HepG2 (cell line): ENCODE measurements at regions of chr11 and their contacts with region 1.

Region 1: DNA sequence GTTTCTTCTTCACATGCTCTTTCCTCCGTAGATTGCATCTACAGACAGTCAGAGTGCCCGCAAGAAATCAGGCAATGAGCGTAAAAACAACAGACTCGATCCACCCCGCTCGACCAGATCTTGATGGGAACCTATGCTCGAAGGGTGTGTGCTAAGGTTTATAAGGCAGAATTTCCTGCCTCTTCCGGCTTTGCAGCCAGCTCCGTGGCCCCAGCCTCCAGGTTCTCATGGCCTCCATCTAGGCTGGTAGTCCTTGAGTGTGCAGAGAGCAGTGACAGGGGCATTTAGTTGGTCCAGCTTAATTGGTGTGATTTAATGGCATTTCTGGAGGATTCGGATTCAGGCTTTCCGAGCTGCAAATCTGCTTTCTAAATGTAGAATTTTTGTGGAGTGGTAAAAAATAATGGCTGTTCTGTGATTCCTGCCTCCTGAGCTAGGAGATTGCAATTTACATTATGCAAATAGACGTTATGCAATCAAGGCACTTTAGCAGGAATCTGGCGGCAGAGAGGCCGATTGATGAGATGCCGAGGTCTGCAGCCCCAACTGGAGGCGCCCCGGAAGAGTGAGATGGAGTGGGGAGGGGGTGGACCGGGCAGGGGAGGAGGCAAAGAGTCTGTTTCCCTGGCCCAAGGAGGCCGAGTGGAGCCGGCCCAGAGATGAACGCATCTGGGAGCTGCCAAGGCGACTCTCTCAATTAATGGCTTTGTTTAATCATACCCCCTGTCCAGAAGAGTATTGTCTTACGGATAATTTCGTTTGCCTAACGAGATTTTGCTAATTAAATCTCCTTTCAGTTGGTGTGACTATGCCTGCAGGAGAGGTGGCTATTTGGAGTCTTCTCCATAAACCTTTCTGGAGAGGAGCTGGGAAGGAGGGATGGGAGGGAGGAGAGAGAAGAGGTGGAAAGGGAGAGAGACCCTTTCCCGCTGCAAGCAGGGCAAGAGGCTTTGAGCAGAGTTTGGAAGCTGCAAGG is 75.3 kb downstream of the PKNOX2 start:
- DNase-seq: no peak
- ATAC-seq: no peak
- H3K4me3 ChIP-seq: no peak overlapping the region
- H3K27ac ChIP-seq: no peak overlapping the region
- H3K4me1 ChIP-seq: peaks cover 10% of the 10 kb centered on the region
- H3K27me3 ChIP-seq: peaks cover 0 to 5% of the 10 kb centered on the region in 2 experiments; a peak in 2 of 5 replicates
- CTCF ChIP-seq: no peak
- EP300 ChIP-seq: no peak
- POLR2A ChIP-seq: no peak
- RAD21 ChIP-seq: no peak

Region 2: GRCh38 chr11:124732230-124732629 is 507.6 kb before region 1 on chr11:
- CTCF ChIA-PET with region 1: no interaction called
- POLR2A ChIA-PET with region 1: no interaction called
- in situ Hi-C with region 1: no loop called
- intact Hi-C with region 1: loop called (anchors 5 kb)
- DNase-seq: no peak
- ATAC-seq: no peak
- H3K4me3 ChIP-seq: no peak overlapping the region
- H3K27ac ChIP-seq: no peak overlapping the region
- H3K4me1 ChIP-seq: no peaks in the 10 kb centered on the region
- H3K27me3 ChIP-seq: peaks cover 0 to 24% of the 10 kb centered on the region in 2 experiments; a peak in 4 of 5 replicates
- CTCF ChIP-seq: no peak
- EP300 ChIP-seq: no peak
- POLR2A ChIP-seq: no peak
- RAD21 ChIP-seq: no peak

Region 3: DNA sequence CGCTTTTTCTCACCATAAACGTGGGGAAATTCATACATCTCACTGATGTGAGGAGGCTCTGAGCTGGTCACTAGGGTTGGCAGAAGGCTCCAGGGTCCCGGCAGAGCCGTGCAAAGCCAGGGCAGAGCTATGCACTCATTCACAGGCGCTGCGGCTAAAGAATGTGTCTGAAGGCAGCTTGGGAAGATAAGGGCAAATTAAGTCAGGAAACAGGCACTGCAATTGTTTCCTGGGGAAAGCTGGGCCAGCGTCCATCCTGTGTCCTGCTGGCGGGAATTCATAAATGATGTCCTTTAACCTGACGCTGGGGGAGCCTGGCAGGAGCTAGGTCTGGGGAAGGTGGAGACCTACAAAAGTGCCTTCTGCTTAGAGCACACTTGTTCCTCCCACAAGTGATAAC is 47.7 kb before region 1 on chr11:
- CTCF ChIA-PET with region 1: no interaction called
- POLR2A ChIA-PET with region 1: no interaction called
- in situ Hi-C with region 1: no loop called
- intact Hi-C with region 1: no loop called
- DNase-seq: no peak
- ATAC-seq: no peak
- H3K4me3 ChIP-seq: no peak overlapping the region
- H3K27ac ChIP-seq: no peak overlapping the region
- H3K4me1 ChIP-seq: no peaks in the 10 kb centered on the region
- H3K27me3 ChIP-seq: peaks cover 3 to 65% of the 10 kb centered on the region in 2 experiments; a peak in 4 of 5 replicates
- CTCF ChIP-seq: no peak
- EP300 ChIP-seq: no peak
- POLR2A ChIP-seq: no peak
- RAD21 ChIP-seq: no peak